ENCODE measurements at regions of chr18 and their contacts with region 1.

Region 1: GRCh38 chr18:41197967-41198366 is 757.1 kb upstream of the PIK3C3 start:
- DNase-seq: no peak
- ATAC-seq: no peak
- H3K4me3 ChIP-seq: no peak overlapping the region
- H3K27ac ChIP-seq: no peak overlapping the region
- H3K4me1 ChIP-seq: no peaks in the 10 kb centered on the region
- H3K27me3 ChIP-seq: no peaks in the 10 kb centered on the region
- CTCF ChIP-seq: no peak

Region 2: DNA sequence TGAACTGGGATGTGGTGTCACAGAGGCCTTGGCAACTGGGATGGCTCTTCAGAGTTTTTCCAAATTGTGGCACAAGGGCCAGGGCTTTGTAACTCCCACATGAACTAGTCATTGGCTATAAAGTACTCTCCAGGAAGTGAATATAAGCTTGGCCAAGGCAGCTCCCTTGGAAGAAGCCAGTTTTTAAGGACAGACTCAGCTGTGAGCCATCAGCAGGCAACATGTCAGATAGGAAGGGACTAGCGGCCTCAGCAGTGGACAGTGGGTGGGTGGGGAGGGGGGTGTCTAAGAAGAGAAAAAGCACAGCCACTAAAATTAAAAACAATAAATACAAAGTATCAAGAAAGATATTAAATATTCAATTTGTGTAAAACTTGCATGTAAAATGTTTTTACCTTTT is 66.0 kb after region 1 on chr18:
- intact Hi-C with region 1: loop called in 1 of 10 experiments (anchors 10 kb)
- DNase-seq: no peak
- ATAC-seq: no peak
- H3K4me3 ChIP-seq: no peak overlapping the region
- H3K27ac ChIP-seq: no peak overlapping the region
- H3K4me1 ChIP-seq: no peaks in the 10 kb centered on the region
- H3K27me3 ChIP-seq: no peaks in the 10 kb centered on the region
- CTCF ChIP-seq: no peak